T-cell (primary cell): ENCODE measurements at regions of chr3 and their contacts with region 1.

Region 1: DNA sequence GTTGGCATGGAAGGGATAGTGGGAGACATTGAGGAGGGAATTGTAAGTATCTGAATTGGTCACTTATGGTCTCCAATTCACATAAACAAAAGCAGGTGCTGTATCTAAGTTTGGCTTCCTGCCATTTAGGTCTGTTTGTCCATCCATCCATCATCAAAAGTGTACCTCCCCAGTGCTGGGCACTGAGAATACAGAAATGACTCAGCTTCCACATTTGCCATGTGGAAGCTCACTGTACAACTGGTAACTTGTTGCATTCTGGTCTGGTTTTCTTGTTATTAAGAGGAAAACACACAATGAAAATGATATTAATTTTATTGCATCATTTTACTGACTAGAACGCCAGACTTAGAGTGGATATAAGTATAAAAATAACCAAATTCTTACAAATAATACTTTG is 30.9 kb upstream of the MUC13 start:
- DNase-seq: no peak
- ATAC-seq: no peak
- H3K4me3 ChIP-seq: no peak overlapping the region
- H3K4me3 Mint-ChIP-seq: no peak overlapping the region
- H3K27ac ChIP-seq: no peak overlapping the region
- H3K27ac Mint-ChIP-seq: no peak overlapping the region
- H3K4me1 ChIP-seq: no peaks in the 10 kb centered on the region
- H3K4me1 Mint-ChIP-seq: no peaks in the 10 kb centered on the region
- H3K27me3 ChIP-seq: no peaks in the 10 kb centered on the region
- H3K27me3 Mint-ChIP-seq: no peaks in the 10 kb centered on the region

Region 2: GRCh38 chr3:124876401-124876878 is 89.0 kb before region 1 on chr3:
- CTCF ChIA-PET with region 1: no interaction called
- POLR2A ChIA-PET with region 1: no interaction called
- DNase-seq: no peak
- ATAC-seq: no peak
- H3K4me3 ChIP-seq: no peak overlapping the region
- H3K4me3 Mint-ChIP-seq: no peak overlapping the region
- H3K27ac ChIP-seq: no peak overlapping the region
- H3K27ac Mint-ChIP-seq: no peak overlapping the region
- H3K4me1 ChIP-seq: peaks cover 0 to 4% of the 10 kb centered on the region in 2 experiments
- H3K4me1 Mint-ChIP-seq: peaks cover 11 to 13% (median 12%) of the 10 kb centered on the region in 3 donors
- H3K27me3 ChIP-seq: peaks cover 0 to 9% of the 10 kb centered on the region in 2 experiments
- H3K27me3 Mint-ChIP-seq: peaks cover 6 to 12% of the 10 kb centered on the region in 2 donors

Region 3: DNA sequence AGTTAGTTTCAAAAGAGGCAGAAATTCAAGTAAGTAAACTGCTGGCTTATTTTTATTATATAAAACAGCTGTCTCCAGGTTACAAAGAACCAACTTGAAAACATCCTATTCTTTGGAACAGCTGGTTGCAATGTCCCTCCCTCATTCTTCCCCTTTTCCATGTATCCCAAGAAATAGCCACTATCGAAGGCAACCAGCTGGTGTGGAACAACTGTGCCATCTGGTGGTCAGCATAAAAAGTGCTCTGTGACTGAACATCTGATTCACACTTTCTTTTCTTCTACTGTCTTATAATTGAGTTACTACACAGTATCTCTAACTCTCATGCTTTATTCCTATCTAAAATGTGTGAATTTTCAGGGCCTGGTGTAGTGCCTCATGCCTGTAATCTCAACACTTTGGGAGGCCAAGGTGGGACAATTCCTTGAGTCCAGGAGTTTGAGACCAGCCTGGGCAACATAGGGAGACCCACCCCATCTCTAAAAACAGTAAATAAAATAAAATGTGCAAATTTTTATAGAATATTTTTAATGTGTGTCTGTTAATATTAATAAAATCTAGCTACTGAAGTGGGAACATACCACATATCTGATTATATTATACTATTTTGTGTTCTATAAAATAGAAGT is 620.3 kb after region 1 on chr3:
- CTCF ChIA-PET with region 1: interaction called in 1 of 2 experiments, 11 read pairs
- POLR2A ChIA-PET with region 1: no interaction called
- DNase-seq: peak in 18 of 35 experiments; percentile 9 to 71 (median 21)
- ATAC-seq: peak; percentile 44 to 60 (median 46)
- H3K4me3 ChIP-seq: no peak overlapping the region
- H3K4me3 Mint-ChIP-seq: no peak overlapping the region
- H3K27ac ChIP-seq: no peak overlapping the region
- H3K27ac Mint-ChIP-seq: no peak overlapping the region
- H3K4me1 ChIP-seq: peaks cover 0 to 4% of the 10 kb centered on the region in 2 experiments
- H3K4me1 Mint-ChIP-seq: peaks cover 29 to 34% (median 29%) of the 10 kb centered on the region in 3 donors
- H3K27me3 ChIP-seq: no peaks in the 10 kb centered on the region
- H3K27me3 Mint-ChIP-seq: no peaks in the 10 kb centered on the region